IMR-90 (cell line): ENCODE measurements at regions of chr7 and their contacts with region 1.

Region 1: DNA sequence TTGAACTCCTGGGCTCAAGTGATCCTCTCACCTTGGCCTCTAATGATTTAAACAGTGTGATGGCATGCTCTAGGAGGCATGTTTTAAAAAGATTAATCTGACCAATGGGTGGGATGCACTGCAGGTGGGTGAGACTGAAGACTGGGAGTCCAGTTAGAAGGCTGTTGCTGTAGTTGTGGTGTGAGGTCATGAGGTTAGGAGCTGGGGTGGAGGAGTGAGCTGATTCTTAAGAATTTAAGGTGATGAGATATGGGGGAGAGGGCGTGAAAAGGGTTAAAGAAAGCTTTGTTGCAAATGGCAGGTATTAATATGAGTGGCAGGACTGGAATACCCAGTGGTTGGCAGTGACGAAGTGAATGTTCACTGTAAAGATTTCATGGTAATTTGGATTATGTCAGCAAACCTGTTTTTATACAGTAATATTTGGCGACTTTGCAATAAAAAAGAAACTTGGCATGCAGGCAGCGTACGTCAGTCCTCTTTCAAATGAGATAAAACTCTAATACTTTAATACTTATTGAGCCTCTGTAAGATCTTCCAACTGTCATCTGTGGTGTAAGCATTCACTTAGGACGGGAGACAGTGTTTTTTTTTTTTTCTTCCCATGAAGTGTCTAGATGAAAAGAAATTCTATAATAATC is 72.8 kb upstream of the MTPN start:
- DNase-seq: no peak
- ATAC-seq: no peak
- H3K4me3 ChIP-seq: no peak overlapping the region
- H3K27ac ChIP-seq: no peak overlapping the region
- H3K4me1 ChIP-seq: no peaks in the 10 kb centered on the region
- H3K27me3 ChIP-seq: no peaks in the 10 kb centered on the region
- CTCF ChIP-seq: no peak
- POLR2A ChIP-seq: no peak
- RAD21 ChIP-seq: no peak

Region 2: DNA sequence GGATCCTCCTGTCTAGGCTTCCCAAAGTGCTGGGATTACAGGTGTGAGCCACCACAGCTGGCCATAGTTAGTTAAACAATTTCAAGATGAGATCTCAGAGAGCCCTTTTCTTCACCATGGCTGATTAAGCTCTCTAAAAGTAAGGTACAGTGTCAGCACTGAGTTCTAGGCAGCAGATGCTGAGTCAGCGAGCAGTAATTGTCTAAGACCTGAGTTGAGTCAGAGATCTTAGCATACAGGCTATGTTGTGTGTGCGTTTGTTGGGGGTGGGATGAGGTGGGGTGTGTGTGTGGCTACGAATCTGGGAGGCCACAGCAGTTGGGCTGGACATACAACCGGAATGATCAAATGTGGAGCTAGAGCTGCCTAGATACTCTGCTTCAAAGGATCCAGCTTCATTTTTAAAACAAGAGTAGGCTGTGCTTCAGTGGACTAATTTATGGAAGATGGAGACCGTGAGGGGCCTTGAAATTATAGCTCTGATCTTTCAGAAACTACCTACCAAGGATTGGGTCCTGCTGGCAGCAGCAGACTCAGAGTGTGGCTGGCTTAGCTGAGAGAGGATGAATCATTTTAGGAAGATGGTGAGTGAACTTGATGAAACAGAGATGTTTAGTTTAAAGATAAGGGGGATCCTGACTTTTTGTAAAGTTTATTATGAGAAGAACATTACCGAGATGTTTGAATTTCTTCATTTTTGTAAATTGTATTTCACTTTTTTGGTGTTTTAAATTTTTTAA is 55.3 kb before region 1 on chr7:
- CTCF ChIA-PET with region 1: no interaction called
- POLR2A ChIA-PET with region 1: no interaction called
- dilution Hi-C with region 1: no loop called
- in situ Hi-C with region 1: no loop called
- intact Hi-C with region 1: loop called (anchors 5 kb)
- DNase-seq: peak; percentile 59
- ATAC-seq: peak; percentile 67
- H3K4me3 ChIP-seq: no peak overlapping the region
- H3K27ac ChIP-seq: no peak overlapping the region
- H3K4me1 ChIP-seq: no peaks in the 10 kb centered on the region
- H3K27me3 ChIP-seq: no peaks in the 10 kb centered on the region
- CTCF ChIP-seq: no peak
- POLR2A ChIP-seq: no peak
- RAD21 ChIP-seq: no peak